Esophagus muscularis mucosa (tissue), 4 donors: ENCODE measurements at regions of chr16 and their contacts with region 1.

Region 1: GRCh38 chr16:4253394-4254150 is 11.7 kb upstream of the SRL start:
- DNase-seq: peak; percentile 100
- H3K4me3 ChIP-seq: peak overlapping the region; percentile 56 to 72 (median 66)
- H3K27ac ChIP-seq: peak overlapping the region; percentile 88 to 96 (median 92)
- H3K4me1 ChIP-seq: peaks cover 4 to 12% (median 9%) of the 10 kb centered on the region in 4 donors
- H3K27me3 ChIP-seq: no peaks in the 10 kb centered on the region
- CTCF ChIP-seq: no peak
- EP300 ChIP-seq: peak; percentile 70
- POLR2A ChIP-seq: peak; percentile 52

Region 2: GRCh38 chr16:3938848-3939624 is 314.5 kb before region 1 on chr16:
- intact Hi-C with region 1: loop called (anchors 5 kb)
- DNase-seq: no peak
- H3K4me3 ChIP-seq: peak overlapping the region; percentile 54 to 67 (median 60)
- H3K27ac ChIP-seq: no peak overlapping the region
- H3K4me1 ChIP-seq: peaks cover 10 to 16% (median 14%) of the 10 kb centered on the region in 4 donors
- H3K27me3 ChIP-seq: no peaks in the 10 kb centered on the region
- CTCF ChIP-seq: peak; percentile 69 to 96 (median 88)
- EP300 ChIP-seq: no peak
- POLR2A ChIP-seq: no peak

Region 3: GRCh38 chr16:3983081-3983520 is 270.5 kb before region 1 on chr16:
- intact Hi-C with region 1: loop called (anchors 10 kb)
- DNase-seq: no peak
- H3K4me3 ChIP-seq: no peak overlapping the region
- H3K27ac ChIP-seq: no peak overlapping the region
- H3K4me1 ChIP-seq: peaks cover 3 to 24% (median 19%) of the 10 kb centered on the region in 4 donors
- H3K27me3 ChIP-seq: no peaks in the 10 kb centered on the region
- CTCF ChIP-seq: peak; percentile 61 to 84 (median 72)
- EP300 ChIP-seq: no peak
- POLR2A ChIP-seq: no peak

Region 4: DNA sequence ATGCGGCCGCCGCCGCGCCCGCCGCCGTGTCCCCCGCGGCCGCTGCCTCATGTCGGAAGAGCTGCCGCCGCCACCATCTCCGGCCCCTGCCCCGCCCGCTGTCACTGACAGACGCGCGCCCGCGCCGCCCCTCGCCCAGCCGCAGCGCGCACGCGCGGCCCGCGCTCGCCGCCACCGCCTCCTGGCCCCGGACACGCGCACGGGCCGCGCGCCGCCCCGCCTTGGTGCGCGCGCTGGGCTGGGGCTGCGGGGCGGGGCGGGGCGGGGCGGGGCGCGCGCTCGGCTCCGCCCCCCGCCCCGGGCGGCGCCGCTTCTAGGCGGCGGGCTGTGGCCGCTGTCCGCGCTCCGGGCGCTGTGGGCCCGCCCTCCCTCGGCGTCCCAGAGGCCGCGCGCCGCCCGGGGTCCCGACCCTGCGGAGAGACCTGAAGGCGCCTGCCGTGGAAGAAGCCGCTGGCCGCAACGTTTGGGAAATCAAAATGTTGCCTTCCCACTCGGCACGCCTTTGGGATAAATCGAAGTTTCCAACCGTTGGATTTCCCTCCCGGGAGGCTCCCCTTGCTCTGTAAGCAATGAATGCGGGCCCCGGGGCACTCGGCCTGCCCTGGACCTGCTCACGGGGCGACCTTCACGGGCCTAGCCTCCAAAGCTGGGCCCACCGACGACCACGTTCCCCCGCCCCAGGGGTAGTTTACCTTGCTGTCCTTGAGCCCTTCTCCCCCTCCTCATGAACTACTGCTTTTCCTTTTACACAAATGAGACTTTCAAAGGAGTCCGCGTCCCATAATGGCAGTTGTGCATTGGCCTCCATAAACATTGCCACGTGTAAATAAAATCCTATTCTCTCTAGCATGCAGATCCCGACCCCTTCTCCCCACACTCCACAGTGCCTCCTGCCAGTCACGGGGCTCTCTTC is 137.0 kb before region 1 on chr16 and contains the start of gene ADCY9:
- intact Hi-C with region 1: loop called (anchors 5 kb)
- DNase-seq: no peak
- H3K4me3 ChIP-seq: peak within 1 kb of the TSS; percentile 82 to 94 (median 86)
- H3K27ac ChIP-seq: peak within 1 kb of the TSS; percentile 82 to 89 (median 87)
- H3K4me1 ChIP-seq: peaks cover 28 to 49% (median 48%) of the 10 kb centered on the region in 4 donors
- H3K27me3 ChIP-seq: no peaks in the 10 kb centered on the region
- CTCF ChIP-seq: no peak
- EP300 ChIP-seq: no peak
- POLR2A ChIP-seq: no peak
- total RNA-seq, gene ADCY9: 35.8 to 72.9 (median 55.7) TPM

Region 5: DNA sequence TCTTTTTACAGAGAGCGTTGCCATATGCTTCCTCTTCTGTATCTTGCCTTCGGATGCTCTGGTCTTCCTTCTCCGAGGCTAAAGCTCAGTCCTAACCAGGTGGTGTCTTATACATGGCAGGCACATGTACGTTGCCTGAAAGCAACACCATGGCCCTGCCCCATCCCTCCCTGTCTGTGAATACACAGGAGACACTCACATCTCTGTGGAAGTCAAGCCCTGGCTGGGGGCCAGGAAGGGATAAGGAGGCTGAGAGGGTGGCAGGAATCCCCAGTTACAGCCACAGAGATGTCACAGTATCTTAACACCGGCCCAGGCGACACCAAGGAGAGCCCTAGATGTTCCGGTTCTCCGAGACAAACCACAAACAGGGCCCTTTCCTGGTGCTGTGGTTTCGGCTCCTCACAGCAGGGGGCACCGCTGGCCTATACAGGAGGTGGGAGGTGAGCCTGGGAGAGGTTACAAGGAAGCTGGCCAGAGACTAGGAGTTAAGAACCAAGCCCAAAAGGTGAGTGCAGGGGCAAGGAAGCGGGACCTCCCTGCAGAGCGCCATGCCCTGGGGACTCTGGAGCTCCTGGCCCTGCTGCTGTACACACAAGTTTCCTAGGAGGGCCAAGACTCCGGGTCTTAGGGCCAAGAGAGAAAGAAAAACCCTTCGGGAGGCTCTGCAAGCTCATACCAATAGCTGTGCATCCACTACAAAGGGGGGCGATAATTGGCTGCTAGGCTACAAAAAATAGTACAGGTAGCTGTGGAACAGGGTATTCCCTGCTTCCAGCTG is 53.4 kb before region 1 on chr16:
- intact Hi-C with region 1: loop called (anchors 2 kb)
- DNase-seq: peak; percentile 94
- H3K4me3 ChIP-seq: no peak overlapping the region
- H3K27ac ChIP-seq: no peak overlapping the region
- H3K4me1 ChIP-seq: peaks cover 4 to 10% (median 9%) of the 10 kb centered on the region in 4 donors
- H3K27me3 ChIP-seq: no peaks in the 10 kb centered on the region
- CTCF ChIP-seq: peak; percentile 72 to 86 (median 83)
- EP300 ChIP-seq: no peak
- POLR2A ChIP-seq: no peak

Region 6: DNA sequence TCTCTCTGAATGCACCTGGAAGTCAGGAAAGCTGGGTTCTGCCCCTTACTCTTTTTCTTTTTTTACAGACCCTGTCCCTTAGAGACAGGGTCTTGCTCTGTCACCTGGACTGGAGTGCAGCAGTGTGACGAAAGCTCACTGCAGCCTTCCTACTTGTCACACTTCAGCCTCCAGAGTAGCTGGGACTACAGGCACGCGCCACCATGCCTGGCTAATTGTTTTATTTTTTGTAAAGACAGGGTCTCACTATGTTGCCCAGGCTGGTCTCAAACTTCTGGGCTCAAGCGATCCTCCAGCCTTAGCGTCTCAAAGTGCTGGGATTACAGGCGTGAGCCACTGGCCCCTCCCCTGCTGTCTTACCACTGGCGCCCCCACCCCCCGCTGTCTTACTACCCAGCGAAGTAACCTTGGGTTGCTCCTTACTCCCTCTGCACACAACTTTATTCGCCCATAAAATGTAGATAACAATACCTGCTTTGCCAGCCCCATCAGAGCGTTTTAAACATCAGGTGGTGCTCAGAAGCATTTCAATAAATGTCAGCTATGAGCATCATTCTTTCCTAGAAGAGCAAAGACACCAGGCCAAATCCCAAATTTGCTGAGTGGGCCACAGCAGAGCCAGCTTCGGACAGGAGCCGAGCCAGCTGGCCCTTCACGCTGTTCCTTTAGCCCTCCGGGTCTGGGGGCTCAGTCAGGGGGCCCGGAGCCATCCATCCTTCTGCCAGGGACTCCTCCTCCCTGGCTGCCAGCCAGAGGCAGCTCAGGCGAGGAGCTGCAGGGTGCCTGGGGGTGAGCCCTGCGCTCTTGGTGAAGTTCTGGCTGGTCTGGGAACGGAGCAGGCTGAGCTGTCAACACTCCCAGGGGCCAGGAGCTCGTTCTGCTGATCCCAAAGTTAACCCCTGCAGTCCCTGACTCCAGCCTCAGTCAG is 36.1 kb before region 1 on chr16:
- intact Hi-C with region 1: loop called (anchors 5 kb)
- DNase-seq: no peak
- H3K4me3 ChIP-seq: no peak overlapping the region
- H3K27ac ChIP-seq: peak overlapping the region; percentile 26 to 58 (median 49)
- H3K4me1 ChIP-seq: peaks cover 34 to 48% (median 41%) of the 10 kb centered on the region in 4 donors
- H3K27me3 ChIP-seq: no peaks in the 10 kb centered on the region
- CTCF ChIP-seq: no peak
- EP300 ChIP-seq: no peak
- POLR2A ChIP-seq: no peak

Region 7: DNA sequence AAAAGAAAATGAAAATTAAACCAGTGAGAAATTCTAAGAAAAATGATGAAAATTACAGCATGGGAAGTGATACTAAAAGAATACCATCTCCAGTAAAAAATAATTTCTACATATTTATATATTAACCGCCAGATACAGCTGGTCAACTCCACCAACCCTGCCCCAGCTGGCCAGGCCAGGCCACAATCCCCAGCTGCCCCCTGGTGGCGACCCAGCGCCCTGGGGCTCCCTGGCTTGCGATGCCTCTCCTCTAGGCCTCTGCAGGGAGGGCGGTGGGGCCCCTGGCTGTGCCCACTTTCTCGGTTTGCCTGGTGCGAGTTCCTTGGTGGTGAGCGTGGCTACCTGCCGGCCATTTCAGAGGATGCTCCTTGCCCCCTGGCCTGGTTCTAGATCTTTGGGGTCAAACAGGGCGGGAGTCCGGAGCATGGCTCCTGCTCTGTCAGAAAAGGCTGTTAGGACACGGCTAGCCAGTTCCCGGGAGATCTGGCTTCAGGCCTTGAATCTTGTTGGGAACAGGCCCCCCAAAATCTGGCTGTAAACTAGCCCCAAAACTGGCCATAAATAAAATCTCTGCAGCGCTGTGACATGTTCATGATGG is 76.8 kb after region 1 on chr16:
- intact Hi-C with region 1: no loop called
- DNase-seq: no peak
- H3K4me3 ChIP-seq: no peak overlapping the region
- H3K27ac ChIP-seq: peak overlapping the region; percentile 29 to 90 (median 84)
- H3K4me1 ChIP-seq: peaks cover 39 to 65% (median 60%) of the 10 kb centered on the region in 4 donors
- H3K27me3 ChIP-seq: no peaks in the 10 kb centered on the region
- CTCF ChIP-seq: peak; percentile 94 to 99 (median 98)
- EP300 ChIP-seq: no peak
- POLR2A ChIP-seq: no peak